Activated naive CD8-positive, alpha-beta T cell treated with anti-CD3 and anti-CD28 coated beads, Interleukin-2, amount 10 ng/mL, durations not matched to agents 7 days and 5 days (primary cell): ENCODE measurements at regions of chr17 and their contacts with region 1.

Region 1: GRCh38 chr17:67441052-67441927 is 64.2 kb downstream of the PITPNC1 start:
- DNase-seq: peak; percentile 55
- ATAC-seq: peak; percentile 95
- H3K4me3 Mint-ChIP-seq: peak overlapping the region; percentile 85
- H3K27ac Mint-ChIP-seq: peak overlapping the region; percentile 97
- H3K4me1 Mint-ChIP-seq: peaks cover 57% of the 10 kb centered on the region
- H3K27me3 Mint-ChIP-seq: no peaks in the 10 kb centered on the region

Region 2: GRCh38 chr17:67390646-67391384 is 50.5 kb before region 1 on chr17:
- POLR2A ChIA-PET with region 1: interaction called, 41 read pairs
- DNase-seq: peak; percentile 68
- ATAC-seq: peak; percentile 92
- H3K4me3 Mint-ChIP-seq: peak overlapping the region; percentile 88
- H3K27ac Mint-ChIP-seq: peak overlapping the region; percentile 92
- H3K4me1 Mint-ChIP-seq: peaks cover 55% of the 10 kb centered on the region
- H3K27me3 Mint-ChIP-seq: no peaks in the 10 kb centered on the region

Region 3: DNA sequence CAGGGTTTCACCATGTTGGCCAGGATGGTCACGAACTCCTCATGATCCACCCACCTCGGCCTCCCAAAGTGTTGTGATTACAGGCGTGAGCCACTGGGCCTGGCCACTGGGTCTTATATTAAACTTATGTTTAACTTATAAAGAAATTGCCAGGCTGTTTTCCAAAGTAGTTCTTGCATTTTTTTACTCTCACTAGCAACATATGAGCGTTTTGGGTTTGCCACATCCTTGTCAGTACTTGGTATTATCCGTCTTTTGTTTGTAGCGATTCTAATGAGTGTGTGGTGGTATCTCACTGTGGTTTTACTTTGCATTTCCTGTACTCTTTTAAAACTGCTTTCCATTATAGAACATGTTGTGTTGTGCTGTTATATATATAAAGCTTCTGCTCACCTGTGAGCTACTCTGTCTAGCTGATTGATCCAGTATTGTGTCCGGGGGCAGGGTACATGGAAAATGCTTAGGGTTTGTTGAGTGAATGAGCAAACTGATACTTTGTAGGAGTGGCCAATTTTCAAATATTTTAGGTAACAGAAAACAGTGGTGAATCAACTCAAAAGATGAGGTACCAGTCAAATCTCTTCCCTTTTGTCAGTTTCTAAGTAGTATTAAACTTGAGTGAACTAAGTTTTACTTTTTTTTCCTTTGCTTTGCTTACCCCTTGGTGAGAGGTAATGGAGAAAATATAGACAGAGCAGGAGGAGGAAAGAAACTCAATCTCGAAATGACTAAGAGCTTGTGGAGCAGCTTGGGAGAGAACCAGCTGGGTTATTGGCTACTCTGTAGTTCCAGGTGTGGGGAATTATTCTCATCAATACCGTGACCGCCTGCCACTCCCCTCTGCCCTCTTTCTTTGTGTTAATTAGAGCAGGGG is 11.6 kb after region 1 on chr17:
- POLR2A ChIA-PET with region 1: interaction called, 156 read pairs
- DNase-seq: peak; percentile 54
- ATAC-seq: peak; percentile 85
- H3K4me3 Mint-ChIP-seq: peak overlapping the region; percentile 78
- H3K27ac Mint-ChIP-seq: peak overlapping the region; percentile 97
- H3K4me1 Mint-ChIP-seq: peaks cover 64% of the 10 kb centered on the region
- H3K27me3 Mint-ChIP-seq: no peaks in the 10 kb centered on the region

Region 4: GRCh38 chr17:67469208-67469895 is 28.1 kb after region 1 on chr17:
- POLR2A ChIA-PET with region 1: interaction called, 87 read pairs
- DNase-seq: peak; percentile 55
- ATAC-seq: peak; percentile 90
- H3K4me3 Mint-ChIP-seq: peak overlapping the region; percentile 68
- H3K27ac Mint-ChIP-seq: peak overlapping the region; percentile 88
- H3K4me1 Mint-ChIP-seq: peaks cover 59% of the 10 kb centered on the region
- H3K27me3 Mint-ChIP-seq: no peaks in the 10 kb centered on the region